PC-9 (cell line): ENCODE measurements at regions of chr5 and their contacts with region 1.

Region 1: DNA sequence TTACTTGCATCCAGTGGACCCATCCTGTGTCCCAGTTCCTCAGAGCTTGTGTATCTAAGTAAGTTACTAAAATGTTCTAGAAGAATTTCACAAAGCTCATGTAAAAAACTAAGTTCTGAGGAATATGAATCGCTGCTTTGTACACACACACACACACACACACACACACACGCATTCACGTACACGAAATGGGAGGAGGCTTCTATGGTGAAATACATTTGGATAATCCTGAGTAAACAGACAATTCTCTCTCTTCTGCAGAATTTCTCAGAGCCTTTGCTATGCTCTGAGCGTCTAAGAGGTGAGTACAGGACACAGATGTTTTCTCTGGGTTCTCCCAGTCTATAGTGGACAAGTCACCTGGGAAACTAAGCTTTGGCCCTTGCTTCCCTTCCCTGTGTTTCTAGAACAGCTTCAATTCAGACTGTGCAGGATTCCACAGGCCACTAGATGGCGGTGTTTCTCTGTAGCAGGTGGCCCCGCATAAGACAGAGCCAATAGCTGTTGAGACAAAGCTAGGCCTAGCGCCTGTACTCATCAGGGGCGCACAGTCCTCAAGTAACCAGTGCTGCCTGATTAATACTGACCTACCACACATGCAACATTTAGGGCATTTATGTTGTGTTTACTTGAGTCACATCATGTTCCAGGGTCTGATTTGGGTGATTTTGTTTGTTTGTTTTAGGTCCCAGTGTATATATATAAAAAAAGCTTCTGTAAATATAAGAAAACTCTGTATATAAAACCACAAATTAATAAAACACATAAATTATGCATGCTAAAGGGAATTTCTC is 114.8 kb downstream of the LIFR start:
- DNase-seq: peak; percentile 79 to 96
- H3K4me3 ChIP-seq: no peak overlapping the region
- H3K27ac ChIP-seq: no peak overlapping the region
- H3K4me1 ChIP-seq: no peaks in the 10 kb centered on the region
- H3K27me3 ChIP-seq: peaks cover 10% of the 10 kb centered on the region
- CTCF ChIP-seq: peak; percentile 99

Region 2: GRCh38 chr5:37412515-37413277 is 1029.0 kb before region 1 on chr5:
- CTCF ChIA-PET with region 1: interaction called, 5 read pairs
- POLR2A ChIA-PET with region 1: no interaction called
- intact Hi-C with region 1: loop called (anchors 5 kb)
- DNase-seq: peak; percentile 72 to 79
- H3K4me3 ChIP-seq: no peak overlapping the region
- H3K27ac ChIP-seq: no peak overlapping the region
- H3K4me1 ChIP-seq: no peaks in the 10 kb centered on the region
- H3K27me3 ChIP-seq: no peaks in the 10 kb centered on the region
- CTCF ChIP-seq: peak; percentile 99

Region 3: GRCh38 chr5:38420691-38421390 is 20.8 kb before region 1 on chr5:
- CTCF ChIA-PET with region 1: interaction called, 47 read pairs
- POLR2A ChIA-PET with region 1: no interaction called
- intact Hi-C with region 1: no loop called
- DNase-seq: peak; percentile 40 to 74
- H3K4me3 ChIP-seq: no peak overlapping the region
- H3K27ac ChIP-seq: no peak overlapping the region
- H3K4me1 ChIP-seq: no peaks in the 10 kb centered on the region
- H3K27me3 ChIP-seq: peaks cover 10% of the 10 kb centered on the region; the same call in 1 of the 2 replicates
- CTCF ChIP-seq: peak; percentile 81

Region 4: DNA sequence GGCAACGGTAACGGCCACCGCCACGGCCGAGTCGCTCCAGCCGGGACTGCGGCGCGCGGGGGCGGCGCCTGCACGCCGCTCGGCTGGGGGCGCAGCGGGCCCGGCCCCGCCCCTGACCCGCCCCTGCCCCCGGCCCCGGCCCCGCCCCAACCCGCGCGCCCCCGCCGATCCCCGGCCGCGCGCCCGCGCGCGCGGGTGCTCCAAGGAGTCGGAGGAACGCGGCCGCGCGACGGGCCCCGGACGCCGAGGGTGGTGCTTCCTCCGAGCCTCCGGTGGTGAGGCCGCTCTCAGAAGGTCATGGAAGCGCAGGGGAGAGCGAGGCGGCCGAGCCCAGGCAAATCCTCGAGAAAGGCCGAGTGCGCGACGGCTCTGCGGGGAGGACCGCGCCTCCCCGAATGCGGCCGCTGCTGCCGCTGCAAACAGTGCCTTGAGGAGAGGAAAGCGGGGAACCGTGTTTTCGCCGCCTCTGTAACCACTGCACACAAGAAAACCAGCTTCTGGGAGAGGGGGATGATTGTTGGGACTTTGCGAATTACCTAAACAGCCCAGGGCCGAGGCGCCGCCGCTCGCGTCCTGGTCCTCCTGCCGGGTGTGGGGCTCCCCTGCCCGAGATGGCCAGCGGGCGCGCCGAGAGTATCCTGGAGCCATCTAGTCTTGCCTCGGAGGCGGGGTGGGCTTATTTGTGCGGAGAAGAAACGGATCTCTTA is 115.1 kb after region 1 on chr5 and contains the start of gene LIFR:
- CTCF ChIA-PET with region 1: interaction called, 14 read pairs
- POLR2A ChIA-PET with region 1: interaction called, 3 read pairs
- intact Hi-C with region 1: loop called (anchors 1 kb)
- DNase-seq: peak; percentile 53 to 95
- H3K4me3 ChIP-seq: peak within 1 kb of the TSS; percentile 97
- H3K27ac ChIP-seq: peak within 1 kb of the TSS; percentile 58
- H3K4me1 ChIP-seq: peaks cover 10% of the 10 kb centered on the region; the same call in 1 of the 2 replicates
- H3K27me3 ChIP-seq: 0 out of 2 replicates have a peak, but pooled peaks cover 15% of the 10 kb centered on the region
- CTCF ChIP-seq: no peak
- total RNA-seq, gene LIFR: 22.0 and 28.6 TPM in 2 replicates

Region 5: GRCh38 chr5:38728029-38728428 is 286.4 kb after region 1 on chr5:
- CTCF ChIA-PET with region 1: interaction called, 3 read pairs
- POLR2A ChIA-PET with region 1: no interaction called
- intact Hi-C with region 1: loop called (anchors 2 kb)
- DNase-seq: no peak
- H3K4me3 ChIP-seq: no peak overlapping the region
- H3K27ac ChIP-seq: no peak overlapping the region
- H3K4me1 ChIP-seq: no peaks in the 10 kb centered on the region
- H3K27me3 ChIP-seq: no peaks in the 10 kb centered on the region; the same call in 1 of the 2 replicates
- CTCF ChIP-seq: no peak

Region 6: GRCh38 chr5:38816083-38817030 is 374.7 kb after region 1 on chr5:
- CTCF ChIA-PET with region 1: interaction called, 183 read pairs
- POLR2A ChIA-PET with region 1: no interaction called
- intact Hi-C with region 1: no loop called
- DNase-seq: no peak
- H3K4me3 ChIP-seq: no peak overlapping the region
- H3K27ac ChIP-seq: no peak overlapping the region
- H3K4me1 ChIP-seq: no peaks in the 10 kb centered on the region
- H3K27me3 ChIP-seq: no peaks in the 10 kb centered on the region
- CTCF ChIP-seq: no peak